Activated CD4-positive, alpha-beta T cell treated with anti-CD3 and anti-CD28 coated beads for 36 hours (primary cell): ENCODE measurements at regions of chr11 and their contacts with region 1.

Region 1: GRCh38 chr11:68471360-68472340 is 11.1 kb downstream of the PPP6R3 start:
- DNase-seq: peak; percentile 86
- ATAC-seq: peak; percentile 74
- H3K4me3 Mint-ChIP-seq: peak overlapping the region; percentile 55
- H3K27ac Mint-ChIP-seq: peak overlapping the region; percentile 81
- H3K4me1 Mint-ChIP-seq: peaks cover 77% of the 10 kb centered on the region
- H3K27me3 Mint-ChIP-seq: no peaks in the 10 kb centered on the region

Region 2: DNA sequence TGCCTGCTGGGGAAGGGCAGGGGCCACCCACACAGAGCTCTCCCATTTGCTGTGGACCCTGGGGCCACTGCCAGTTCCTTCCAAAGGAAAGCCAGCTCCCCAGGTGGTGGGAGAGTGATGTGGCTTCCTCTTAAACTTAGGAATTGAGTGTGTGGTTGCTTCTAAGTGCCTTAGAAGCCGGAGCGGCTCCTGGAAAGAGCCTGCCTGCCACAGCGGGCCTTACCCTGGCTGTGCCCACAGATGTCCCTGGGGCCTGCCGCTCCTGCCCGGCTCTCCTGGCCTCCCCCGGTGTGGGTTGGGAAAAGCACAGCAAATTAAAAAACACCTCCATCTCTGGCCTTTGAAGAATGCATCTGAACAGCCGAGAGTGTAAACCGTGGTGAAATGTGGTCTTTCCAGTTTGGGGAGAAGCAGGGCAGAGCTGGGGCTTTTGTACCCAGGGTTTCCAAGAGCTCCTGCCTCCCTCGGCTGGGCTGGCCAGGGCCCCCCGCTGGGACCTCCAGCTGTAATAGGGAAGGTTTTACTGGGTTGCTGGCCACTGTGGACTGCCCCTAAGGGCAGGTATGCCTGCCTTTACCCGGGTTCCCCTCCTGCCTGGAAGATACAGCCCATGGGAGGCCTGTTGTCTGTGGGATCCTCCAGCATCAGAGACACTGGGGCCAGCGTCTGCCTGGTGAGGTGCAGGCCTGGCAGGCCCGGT is 129.0 kb before region 1 on chr11:
- CTCF ChIA-PET with region 1: no interaction called
- POLR2A ChIA-PET with region 1: no interaction called
- intact Hi-C with region 1: no loop called
- DNase-seq: no peak
- ATAC-seq: no peak
- H3K4me3 Mint-ChIP-seq: no peak overlapping the region
- H3K27ac Mint-ChIP-seq: no peak overlapping the region
- H3K4me1 Mint-ChIP-seq: peaks cover 20% of the 10 kb centered on the region
- H3K27me3 Mint-ChIP-seq: no peaks in the 10 kb centered on the region

Region 3: GRCh38 chr11:68506908-68507307 is 35.3 kb after region 1 on chr11:
- CTCF ChIA-PET with region 1: no interaction called
- POLR2A ChIA-PET with region 1: interaction called, 4 read pairs
- intact Hi-C with region 1: loop called in 1 of 2 experiments (anchors 5 kb)
- DNase-seq: no peak
- ATAC-seq: no peak
- H3K4me3 Mint-ChIP-seq: no peak overlapping the region
- H3K27ac Mint-ChIP-seq: no peak overlapping the region
- H3K4me1 Mint-ChIP-seq: peaks cover 71% of the 10 kb centered on the region
- H3K27me3 Mint-ChIP-seq: no peaks in the 10 kb centered on the region